PC-9 (cell line): ENCODE measurements at regions of chr3 and their contacts with region 1.

Region 1: GRCh38 chr3:73292220-73292619 is 230.8 kb downstream of the EBLN2 start:
- DNase-seq: no peak
- H3K4me3 ChIP-seq: no peak overlapping the region
- H3K27ac ChIP-seq: no peak overlapping the region
- H3K4me1 ChIP-seq: no peaks in the 10 kb centered on the region
- H3K27me3 ChIP-seq: peaks cover 23% of the 10 kb centered on the region
- CTCF ChIP-seq: no peak

Region 2: GRCh38 chr3:71317749-71318457 is 1974.3 kb before region 1 on chr3:
- CTCF ChIA-PET with region 1: no interaction called
- POLR2A ChIA-PET with region 1: interaction called, 10 read pairs
- intact Hi-C with region 1: no loop called
- DNase-seq: no peak
- H3K4me3 ChIP-seq: no peak overlapping the region
- H3K27ac ChIP-seq: no peak overlapping the region
- H3K4me1 ChIP-seq: no peaks in the 10 kb centered on the region
- H3K27me3 ChIP-seq: no peaks in the 10 kb centered on the region
- CTCF ChIP-seq: no peak

Region 3: GRCh38 chr3:72661115-72661457 is 631.1 kb before region 1 on chr3:
- CTCF ChIA-PET with region 1: no interaction called
- POLR2A ChIA-PET with region 1: no interaction called
- intact Hi-C with region 1: no loop called
- DNase-seq: peak; percentile 82 to 95
- H3K4me3 ChIP-seq: no peak overlapping the region
- H3K27ac ChIP-seq: no peak overlapping the region
- H3K4me1 ChIP-seq: peaks cover 14% of the 10 kb centered on the region
- H3K27me3 ChIP-seq: no peaks in the 10 kb centered on the region
- CTCF ChIP-seq: no peak

Region 4: DNA sequence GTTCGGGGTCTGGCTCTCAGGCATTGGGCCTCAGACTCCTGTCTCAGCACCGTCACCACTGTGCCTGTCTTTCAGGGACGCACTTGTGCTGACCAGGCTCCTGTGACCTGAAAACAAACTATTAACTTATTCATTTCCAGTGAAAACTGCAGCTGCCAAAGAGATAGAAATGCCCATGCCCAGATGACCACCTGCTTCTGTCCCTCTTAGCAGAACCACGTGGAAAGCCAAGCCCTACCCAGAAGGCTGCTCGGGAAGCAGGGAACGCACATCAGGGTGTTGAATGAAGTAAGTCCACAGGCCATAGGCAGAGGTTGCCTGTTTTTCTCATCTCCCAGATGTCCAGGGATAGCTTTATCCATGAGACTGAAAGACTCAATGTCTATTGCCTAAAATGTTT is 11.5 kb before region 1 on chr3:
- CTCF ChIA-PET with region 1: no interaction called
- POLR2A ChIA-PET with region 1: no interaction called
- intact Hi-C with region 1: no loop called
- DNase-seq: no peak
- H3K4me3 ChIP-seq: no peak overlapping the region
- H3K27ac ChIP-seq: no peak overlapping the region
- H3K4me1 ChIP-seq: no peaks in the 10 kb centered on the region
- H3K27me3 ChIP-seq: 0 out of 2 replicates have a peak, but pooled peaks cover 9% of the 10 kb centered on the region
- CTCF ChIP-seq: no peak